Uterus (tissue), 4 donors: ENCODE measurements at regions of chr12 and their contacts with region 1.

Region 1: GRCh38 chr12:103965590-103966504 is at the start of gene TDG:
- DNase-seq: peak; percentile 98
- H3K4me3 ChIP-seq: peak within 1 kb of the TSS; percentile 92 to 99
- H3K27ac ChIP-seq: peak within 1 kb of the TSS; percentile 90 to 95
- H3K4me1 ChIP-seq: peaks cover 0 to 4% of the 10 kb centered on the region in 2 donors
- H3K27me3 ChIP-seq: no peaks in the 10 kb centered on the region
- CTCF ChIP-seq: peak; percentile 16 to 24 (median 18)
- POLR2A ChIP-seq: peak; percentile 86 to 88
- total RNA-seq, gene TDG: 8.7 to 46.3 (median 19.9) TPM

Region 2: DNA sequence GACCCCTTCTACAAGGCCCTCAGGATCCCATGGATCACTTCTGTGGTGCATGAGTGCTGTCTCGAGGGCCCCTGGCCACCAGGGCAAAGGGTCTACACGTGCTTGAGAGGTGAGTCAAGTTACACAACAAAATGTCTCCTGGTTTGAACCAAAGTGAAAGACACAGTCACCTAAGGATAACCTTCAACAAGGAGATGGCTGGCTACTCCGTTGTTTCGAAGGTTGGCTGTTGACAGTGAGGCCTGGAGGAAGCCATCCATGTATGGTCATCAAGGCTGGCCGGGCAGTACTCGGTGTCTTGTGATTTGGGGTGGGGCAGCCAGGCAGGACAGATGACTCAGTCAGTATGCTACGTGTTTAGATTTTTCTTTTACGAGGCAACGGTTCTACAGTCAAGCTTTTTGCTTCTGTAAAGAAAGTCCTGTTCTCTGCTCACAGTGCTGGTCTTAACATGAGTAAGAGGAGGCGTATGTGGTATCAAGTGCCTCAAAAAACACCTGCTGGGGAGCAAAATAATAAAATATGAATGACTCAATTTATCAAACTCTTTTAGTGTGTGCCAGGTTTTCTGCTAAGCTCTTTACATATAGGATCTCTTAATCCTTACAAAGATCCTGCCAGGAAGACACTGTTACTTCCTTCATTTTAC is 106.8 kb before region 1 on chr12:
- intact Hi-C with region 1: no loop called
- DNase-seq: peak; percentile 84 to 93
- H3K4me3 ChIP-seq: no peak overlapping the region
- H3K27ac ChIP-seq: peak overlapping the region; percentile 93 to 96
- H3K4me1 ChIP-seq: peaks cover 10 to 18% of the 10 kb centered on the region in 2 donors
- H3K27me3 ChIP-seq: no peaks in the 10 kb centered on the region
- CTCF ChIP-seq: no peak
- POLR2A ChIP-seq: peak in 1 of 2 donors; percentile 49

Region 3: DNA sequence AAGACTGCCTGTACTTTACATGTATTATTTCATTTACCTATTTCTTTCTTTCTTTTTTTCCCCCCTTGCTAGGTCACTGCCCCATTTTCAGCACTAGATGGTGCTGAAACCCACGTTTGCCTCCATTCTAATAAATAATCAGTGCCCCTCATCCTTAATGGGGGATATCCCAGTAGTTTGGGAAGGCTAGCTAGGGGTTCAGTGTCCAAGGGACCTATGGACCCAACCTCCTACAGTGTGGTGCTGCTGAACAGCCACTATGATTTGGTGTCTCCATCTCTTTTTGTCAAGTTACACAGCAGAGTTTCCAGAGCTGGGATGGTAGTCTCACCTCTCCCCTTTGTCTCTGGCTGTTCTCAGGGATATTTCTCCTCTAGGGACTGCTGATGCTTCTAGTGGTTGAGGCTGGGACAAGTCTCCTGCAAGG is 91.9 kb after region 1 on chr12:
- intact Hi-C with region 1: loop called (anchors 5 kb)
- DNase-seq: no peak
- H3K4me3 ChIP-seq: no peak overlapping the region
- H3K27ac ChIP-seq: no peak overlapping the region
- H3K4me1 ChIP-seq: no peaks in the 10 kb centered on the region
- H3K27me3 ChIP-seq: no peaks in the 10 kb centered on the region
- CTCF ChIP-seq: peak in 3 of 4 experiments; percentile 21 to 44 (median 34)
- POLR2A ChIP-seq: no peak